Heart left ventricle (tissue), 16 donors: ENCODE measurements at regions of chr7 and their contacts with region 1.

Region 1: DNA sequence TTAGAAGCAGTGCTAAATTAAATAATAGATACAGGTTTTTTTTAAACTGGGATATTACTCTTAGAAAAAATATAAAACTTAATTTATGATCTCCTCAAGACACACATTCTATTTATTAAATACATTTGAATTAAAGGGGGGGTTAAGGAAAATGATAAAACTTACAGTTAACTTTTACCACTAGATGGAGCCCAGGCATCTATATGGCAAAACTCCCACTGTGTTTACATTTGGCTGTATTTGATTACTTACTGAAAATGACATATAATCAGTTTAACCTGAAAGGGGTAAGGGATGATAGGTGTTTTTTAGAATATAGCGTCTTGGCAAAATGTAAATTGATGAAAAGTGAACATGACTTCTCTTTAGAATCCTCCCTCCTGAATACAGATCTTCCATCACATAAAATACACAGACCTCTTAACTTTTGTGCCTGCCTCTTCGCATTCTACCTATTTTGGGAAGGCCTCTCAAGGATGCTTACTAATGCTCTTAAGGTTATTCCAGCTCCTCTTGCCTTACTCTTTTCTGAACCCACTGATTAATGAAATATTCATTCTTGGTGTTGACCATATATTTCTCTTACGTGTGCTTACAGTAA is 235.7 kb downstream of the AGMO start:
- DNase-seq: no peak
- ATAC-seq: no peak
- H3K4me3 ChIP-seq: no peak overlapping the region
- H3K27ac ChIP-seq: no peak overlapping the region
- H3K4me1 ChIP-seq: peaks cover 0 to 4% (median 0%) of the 10 kb centered on the region in 12 donors
- H3K27me3 ChIP-seq: no peaks in the 10 kb centered on the region
- CTCF ChIP-seq: peak; percentile 35 to 76 (median 62)
- POLR2A ChIP-seq: no peak

Region 2: GRCh38 chr7:15389073-15389472 is 62.9 kb after region 1 on chr7:
- intact Hi-C with region 1: loop called in 1 of 10 experiments (anchors 10 kb)
- DNase-seq: no peak
- ATAC-seq: no peak
- H3K4me3 ChIP-seq: no peak overlapping the region
- H3K27ac ChIP-seq: no peak overlapping the region
- H3K4me1 ChIP-seq: no peaks in the 10 kb centered on the region
- H3K27me3 ChIP-seq: no peaks in the 10 kb centered on the region
- CTCF ChIP-seq: no peak
- POLR2A ChIP-seq: no peak

Region 3: GRCh38 chr7:15433151-15433550 is 107.0 kb after region 1 on chr7:
- intact Hi-C with region 1: no loop called
- DNase-seq: no peak
- ATAC-seq: no peak
- H3K4me3 ChIP-seq: no peak overlapping the region
- H3K27ac ChIP-seq: no peak overlapping the region
- H3K4me1 ChIP-seq: no peaks in the 10 kb centered on the region
- H3K27me3 ChIP-seq: no peaks in the 10 kb centered on the region
- CTCF ChIP-seq: no peak
- POLR2A ChIP-seq: no peak

Region 4: DNA sequence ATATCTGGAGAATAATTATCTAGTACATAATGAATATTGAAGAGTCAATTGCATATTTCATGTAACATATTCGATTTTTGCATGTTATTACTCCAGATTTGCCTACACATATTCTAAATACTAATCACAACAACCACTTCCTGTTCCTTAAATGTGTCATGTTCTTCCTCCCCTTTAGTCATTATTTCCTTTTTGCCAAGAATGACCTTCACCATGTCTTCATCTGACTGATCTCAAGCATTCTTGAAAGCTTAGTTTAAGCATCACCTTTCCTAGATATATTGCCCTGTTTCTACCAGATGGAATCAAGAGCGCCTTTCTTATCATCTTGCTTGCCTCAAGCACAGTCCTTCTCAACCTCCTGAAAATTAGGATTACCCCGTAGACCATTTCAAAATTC is 383.8 kb after region 1 on chr7:
- intact Hi-C with region 1: loop called in 1 of 10 experiments (anchors 10 kb)
- DNase-seq: no peak
- ATAC-seq: no peak
- H3K4me3 ChIP-seq: no peak overlapping the region
- H3K27ac ChIP-seq: no peak overlapping the region
- H3K4me1 ChIP-seq: no peaks in the 10 kb centered on the region
- H3K27me3 ChIP-seq: no peaks in the 10 kb centered on the region
- CTCF ChIP-seq: no peak
- POLR2A ChIP-seq: no peak

Region 5: GRCh38 chr7:15720849-15721471 is 394.8 kb after region 1 on chr7:
- intact Hi-C with region 1: loop called (anchors 5 to 10 kb)
- DNase-seq: peak in 3 of 5 donors; percentile 24 to 33 (median 26)
- ATAC-seq: no peak
- H3K4me3 ChIP-seq: no peak overlapping the region
- H3K27ac ChIP-seq: peak overlapping the region in 1 of 12 donors; percentile 17
- H3K4me1 ChIP-seq: peaks cover 0 to 16% (median 6%) of the 10 kb centered on the region in 12 donors
- H3K27me3 ChIP-seq: no peaks in the 10 kb centered on the region
- CTCF ChIP-seq: peak; percentile 52 to 86 (median 74)
- POLR2A ChIP-seq: no peak